ENCODE measurements at regions of chr17 and their contacts with region 1.

Region 1: GRCh38 chr17:49880291-49881053 is 32.6 kb upstream of the TAC4 start:
- DNase-seq: no peak
- H3K4me3 ChIP-seq: no peak overlapping the region; the same call in 1 of the 2 replicates
- CTCF ChIP-seq: peak; percentile 95

Region 2: DNA sequence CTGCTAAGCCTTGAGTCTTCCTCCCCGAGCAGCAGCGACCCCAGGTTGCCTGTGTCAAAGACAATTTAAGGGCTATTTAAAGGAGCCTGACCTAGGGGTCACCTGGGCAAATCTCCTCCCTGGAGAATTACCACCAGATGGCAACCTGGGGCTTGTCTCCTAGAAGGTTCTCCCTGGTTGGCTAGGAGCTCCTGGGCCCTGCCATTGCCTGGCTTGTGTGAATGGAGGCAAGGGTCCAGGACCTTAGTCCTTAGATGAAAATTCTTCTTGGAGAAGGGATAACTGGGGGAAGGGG is 18.7 kb after region 1 on chr17:
- CTCF ChIA-PET with region 1: interaction called, 14 read pairs
- POLR2A ChIA-PET with region 1: no interaction called
- DNase-seq: no peak
- H3K4me3 ChIP-seq: no peak overlapping the region
- CTCF ChIP-seq: no peak

Region 3: DNA sequence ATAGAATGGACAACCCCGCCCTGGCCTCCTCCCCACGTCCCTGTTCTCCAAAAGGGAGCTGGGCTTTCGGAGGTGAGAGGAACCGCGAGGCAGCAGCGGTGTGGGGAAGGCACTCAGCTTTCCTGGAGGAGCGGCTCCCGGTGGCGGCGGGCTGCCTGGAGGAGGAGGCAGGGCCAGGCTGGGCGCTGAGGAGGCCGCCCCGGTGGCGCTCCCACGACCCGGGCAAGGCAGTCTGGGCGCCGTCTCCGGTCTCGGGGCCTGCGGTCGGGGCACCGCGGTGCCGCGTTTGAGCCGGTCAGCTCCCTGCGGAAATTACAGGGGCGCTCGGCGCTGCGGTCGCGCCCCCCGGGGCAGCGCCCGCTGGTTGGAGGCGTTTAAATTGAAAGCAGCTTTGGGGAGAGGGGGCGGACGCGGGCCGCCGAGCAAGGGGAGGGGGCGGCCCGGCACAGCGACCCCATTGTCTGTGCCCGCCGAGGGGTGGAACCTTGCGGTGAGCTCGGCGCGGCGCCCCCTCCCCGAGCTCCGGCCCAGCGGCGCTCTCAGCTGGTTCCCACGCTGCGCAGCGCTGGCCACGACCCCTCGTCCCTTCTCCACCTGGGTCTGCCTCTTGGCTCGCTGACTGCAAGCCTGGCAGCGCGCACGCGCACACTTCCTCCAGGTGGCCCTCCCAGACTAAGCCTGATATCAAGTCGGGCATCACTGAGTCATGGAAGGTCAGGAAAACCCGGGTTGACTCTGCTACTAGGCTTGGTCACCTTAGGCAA is 29.8 kb after region 1 on chr17:
- CTCF ChIA-PET with region 1: interaction called, 10 read pairs
- POLR2A ChIA-PET with region 1: no interaction called
- DNase-seq: no peak
- H3K4me3 ChIP-seq: no peak overlapping the region
- CTCF ChIP-seq: no peak

Region 4: GRCh38 chr17:50026901-50027630 is 146.6 kb after region 1 on chr17:
- CTCF ChIA-PET with region 1: no interaction called
- POLR2A ChIA-PET with region 1: no interaction called
- DNase-seq: no peak
- H3K4me3 ChIP-seq: peak overlapping the region; percentile 51
- CTCF ChIP-seq: peak; percentile 95

Measured in AG04449 (cell line).